Posterior cingulate gyrus (tissue), 11 donors: ENCODE measurements at regions of chr17 and their contacts with region 1.

Region 1: GRCh38 chr17:68909066-68909465 is 46.1 kb downstream of the ABCA8 start:
- DNase-seq: no peak

Region 2: GRCh38 chr17:68777243-68777855 is 131.7 kb before region 1 on chr17:
- intact Hi-C with region 1: loop called (anchors 5 kb)
- DNase-seq: peak in 5 of 10 donors; percentile 10 to 70 (median 53)

Region 3: DNA sequence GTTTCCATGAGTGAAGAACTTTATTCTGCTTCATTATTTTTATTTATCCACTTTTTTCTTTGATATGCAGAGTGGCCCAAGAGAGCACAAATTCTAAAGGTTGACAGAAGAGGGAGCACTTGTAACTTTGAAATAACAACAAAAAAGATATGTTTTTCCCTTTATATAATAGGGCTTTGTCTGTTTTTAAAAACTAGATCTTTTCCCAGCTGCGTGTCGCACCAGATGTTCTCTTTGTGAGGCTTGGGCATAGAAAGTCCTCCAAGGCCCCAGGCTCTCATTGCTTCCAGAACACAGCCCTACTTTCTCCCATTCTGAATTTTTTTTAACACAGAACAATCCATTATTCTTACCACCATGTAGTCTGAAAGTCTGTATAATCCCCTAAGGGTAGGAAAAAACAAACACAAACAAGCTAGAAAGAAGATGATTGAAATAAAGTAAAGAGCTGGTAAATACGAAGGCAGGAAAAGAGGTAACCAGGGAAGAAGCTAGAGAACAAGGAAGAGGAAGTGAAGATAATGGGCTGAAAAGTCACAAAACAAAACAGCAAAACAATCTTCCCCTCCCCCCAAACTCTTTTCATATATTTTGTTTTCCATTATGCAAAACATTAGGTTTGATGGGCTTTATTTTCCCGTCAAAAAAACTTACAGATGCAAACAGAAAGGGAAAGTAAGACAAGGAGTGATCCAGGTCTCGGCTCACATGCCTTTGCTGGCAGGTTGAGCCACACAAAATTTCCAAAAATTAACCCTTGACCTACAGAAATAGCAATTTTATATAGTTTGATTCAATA is 114.2 kb before region 1 on chr17:
- intact Hi-C with region 1: loop called (anchors 1 kb)
- DNase-seq: peak in 8 of 10 donors; percentile 27 to 94 (median 64)

Region 4: DNA sequence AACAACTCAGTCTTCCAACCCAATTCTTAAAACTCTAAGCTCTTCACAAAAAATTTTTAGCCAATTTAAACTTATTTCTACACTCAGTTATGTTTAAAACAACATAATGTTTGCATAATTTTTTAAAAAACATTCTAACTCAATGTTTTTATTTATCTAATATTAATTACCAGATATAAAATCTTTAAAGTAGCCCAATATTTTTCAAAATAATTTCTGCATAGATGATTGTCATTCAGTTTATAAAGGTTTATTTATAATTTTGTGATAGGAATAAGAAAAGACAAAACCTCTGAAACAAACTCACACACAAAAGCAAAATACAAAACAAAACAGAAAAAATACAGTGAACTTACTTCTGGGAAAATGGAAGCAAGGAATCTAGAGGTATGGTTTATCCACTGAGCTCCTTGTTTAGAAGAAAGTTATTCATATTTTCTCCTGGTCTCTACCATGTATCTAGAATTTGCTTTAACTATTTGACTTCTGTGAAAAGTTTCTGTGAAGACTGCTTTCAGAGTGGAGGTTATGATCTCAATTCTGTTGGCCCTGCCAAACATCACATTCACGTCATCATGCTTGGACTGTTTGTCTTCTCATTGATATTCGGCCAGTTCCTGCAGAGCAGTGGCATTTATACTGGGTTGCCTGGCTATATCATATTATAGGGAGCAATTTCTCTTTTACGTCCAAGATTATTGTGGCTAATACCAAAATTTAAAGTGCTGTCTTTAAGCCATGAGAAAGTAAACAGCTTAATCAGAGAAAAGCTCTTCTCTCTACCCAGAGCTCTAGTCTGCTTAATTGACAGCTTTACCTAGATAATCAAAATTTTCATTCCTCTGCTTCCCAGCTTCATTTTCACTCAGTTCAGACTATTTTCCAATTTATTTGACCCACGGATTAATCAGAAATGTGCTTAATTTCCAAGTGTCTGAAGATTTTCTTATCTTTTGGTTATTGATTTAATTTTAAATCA is 46.1 kb after region 1 on chr17 and contains the start of gene ABCA8:
- intact Hi-C with region 1: loop called (anchors 5 kb)
- DNase-seq: peak in 6 of 10 donors; percentile 14 to 56 (median 36)